Activated CD4-positive, alpha-beta T cell treated with anti-CD3 and anti-CD28 coated beads, Interleukin-2, amount 10 ng/mL, durations not matched to agents 24 days and 14 days (primary cell): ENCODE measurements at regions of chr13 and their contacts with region 1.

Region 1: DNA sequence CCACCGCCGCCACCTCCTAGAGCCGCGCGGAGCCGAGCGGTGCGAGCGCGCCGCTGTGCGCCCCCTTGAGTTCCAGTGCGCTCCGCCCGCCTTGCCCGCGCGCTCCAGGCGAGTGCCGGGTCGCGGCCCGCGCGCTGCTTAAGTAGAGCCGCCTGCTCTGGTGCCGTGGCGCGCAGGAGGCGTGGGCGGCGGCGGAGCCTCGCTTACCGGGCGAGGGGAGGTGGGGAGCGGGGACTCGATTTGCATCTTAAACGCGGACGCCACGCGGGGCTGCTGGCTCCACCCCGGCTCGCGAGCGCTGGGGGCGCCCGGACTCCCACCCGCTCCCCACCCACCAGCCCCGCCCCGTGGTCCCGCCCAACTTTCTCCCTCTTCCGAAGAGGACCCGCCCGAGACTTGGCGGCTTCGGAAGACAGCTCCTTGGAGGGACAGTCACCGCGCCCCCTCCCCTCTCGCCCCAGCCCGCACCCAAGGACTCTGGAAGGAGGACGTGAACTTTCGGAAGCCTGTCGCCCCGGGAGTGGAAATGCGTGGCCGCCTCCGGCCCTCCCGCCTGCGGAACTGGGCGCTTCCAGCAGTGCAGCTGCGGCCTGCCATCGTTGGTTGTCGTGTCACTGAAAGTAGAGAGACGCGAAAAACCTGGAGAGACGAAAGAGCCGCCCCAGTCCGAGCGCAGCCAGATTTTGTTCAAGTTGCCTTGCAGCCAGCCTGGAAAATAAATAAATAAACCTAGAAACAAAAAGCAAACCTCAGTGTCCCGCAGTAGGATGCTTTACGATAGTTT is at the start of gene KCTD12:
- DNase-seq: peak; percentile 93
- H3K4me3 Mint-ChIP-seq: peak within 1 kb of the TSS; percentile 89
- H3K27ac Mint-ChIP-seq: peak within 1 kb of the TSS; percentile 87
- H3K4me1 Mint-ChIP-seq: peaks cover 26% of the 10 kb centered on the region
- H3K27me3 Mint-ChIP-seq: peaks cover 40% of the 10 kb centered on the region
- total RNA-seq, gene KCTD12: 11.8 and 12.9 TPM in 2 replicates

Region 2: GRCh38 chr13:76828316-76828741 is 58.2 kb before region 1 on chr13:
- intact Hi-C with region 1: loop called (anchors 5 kb)
- DNase-seq: no peak
- H3K4me3 Mint-ChIP-seq: no peak overlapping the region
- H3K27ac Mint-ChIP-seq: peak overlapping the region; percentile 9
- H3K4me1 Mint-ChIP-seq: peaks cover 4% of the 10 kb centered on the region
- H3K27me3 Mint-ChIP-seq: peaks cover 4% of the 10 kb centered on the region

Region 3: DNA sequence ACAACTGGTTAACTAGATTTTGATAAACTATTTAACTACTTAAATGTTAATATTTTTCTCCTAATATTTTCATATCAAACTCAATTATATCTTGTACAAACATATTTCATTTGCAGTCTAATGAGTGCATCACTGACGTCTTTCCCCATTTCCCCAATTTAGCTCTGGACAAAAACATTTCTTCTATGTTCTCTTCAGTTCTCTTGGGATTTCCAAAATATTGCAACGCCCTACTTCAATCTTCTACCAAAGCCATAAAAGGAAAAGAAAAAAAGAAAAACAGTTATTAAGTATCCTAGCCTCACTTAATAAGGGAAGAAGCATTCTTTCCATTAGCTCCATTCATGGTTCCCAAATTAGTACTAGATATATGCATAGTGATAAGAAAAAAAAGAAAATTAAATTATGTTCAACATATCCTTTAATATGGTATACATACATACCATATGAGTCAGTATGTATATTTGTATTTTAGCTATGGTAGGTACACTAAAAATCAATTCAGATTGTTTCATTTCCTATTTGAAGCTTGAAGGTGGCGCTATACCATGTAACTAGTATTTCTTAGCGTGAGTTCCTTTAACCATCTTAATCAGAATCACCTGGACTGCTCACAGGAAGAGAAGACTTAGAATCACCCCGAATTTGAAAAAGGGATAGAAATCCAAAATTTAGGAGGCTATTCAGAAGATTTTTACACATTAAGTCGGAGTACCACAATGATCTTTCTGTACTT is 130.6 kb after region 1 on chr13:
- intact Hi-C with region 1: no loop called
- DNase-seq: no peak
- H3K4me3 Mint-ChIP-seq: no peak overlapping the region
- H3K27ac Mint-ChIP-seq: no peak overlapping the region
- H3K4me1 Mint-ChIP-seq: peaks cover 23% of the 10 kb centered on the region
- H3K27me3 Mint-ChIP-seq: no peaks in the 10 kb centered on the region